Body of pancreas (tissue), 4 donors: ENCODE measurements at regions of chr1 and their contacts with region 1.

Region 1: GRCh38 chr1:100866041-100866900 is 28.4 kb downstream of the EXTL2 start:
- DNase-seq: peak in 1 of 4 donors; percentile 10
- ATAC-seq: peak; percentile 58
- H3K4me3 ChIP-seq: no peak overlapping the region
- H3K27ac ChIP-seq: no peak overlapping the region
- H3K4me1 ChIP-seq: no peaks in the 10 kb centered on the region
- H3K27me3 ChIP-seq: no peaks in the 10 kb centered on the region
- CTCF ChIP-seq: peak in 6 of 7 experiments; percentile 31 to 63 (median 60)
- POLR2A ChIP-seq: no peak

Region 2: GRCh38 chr1:99808391-99809115 is 1057.7 kb before region 1 on chr1:
- intact Hi-C with region 1: loop called (anchors 5 kb)
- DNase-seq: peak in 2 of 4 donors; percentile 28 to 52
- ATAC-seq: peak; percentile 85
- H3K4me3 ChIP-seq: no peak overlapping the region
- H3K27ac ChIP-seq: no peak overlapping the region
- H3K4me1 ChIP-seq: peaks cover 6% of the 10 kb centered on the region
- H3K27me3 ChIP-seq: no peaks in the 10 kb centered on the region
- CTCF ChIP-seq: peak; percentile 46 to 82 (median 74)
- POLR2A ChIP-seq: no peak

Region 3: GRCh38 chr1:100459358-100460114 is 406.7 kb before region 1 on chr1:
- intact Hi-C with region 1: loop called (anchors 10 kb)
- DNase-seq: peak; percentile 68 to 78 (median 72)
- ATAC-seq: peak; percentile 90
- H3K4me3 ChIP-seq: no peak overlapping the region
- H3K27ac ChIP-seq: no peak overlapping the region
- H3K4me1 ChIP-seq: no peaks in the 10 kb centered on the region
- H3K27me3 ChIP-seq: no peaks in the 10 kb centered on the region
- CTCF ChIP-seq: peak in 6 of 7 experiments; percentile 66 to 84 (median 80)
- POLR2A ChIP-seq: no peak

Region 4: GRCh38 chr1:100604372-100604771 is 261.9 kb before region 1 on chr1:
- intact Hi-C with region 1: loop called (anchors 5 kb)
- DNase-seq: no peak
- ATAC-seq: no peak
- H3K4me3 ChIP-seq: no peak overlapping the region
- H3K27ac ChIP-seq: no peak overlapping the region
- H3K4me1 ChIP-seq: peaks cover 3% of the 10 kb centered on the region
- H3K27me3 ChIP-seq: no peaks in the 10 kb centered on the region
- CTCF ChIP-seq: no peak
- POLR2A ChIP-seq: no peak

Region 5: GRCh38 chr1:100734676-100735075 is 131.6 kb before region 1 on chr1:
- intact Hi-C with region 1: no loop called
- DNase-seq: no peak
- ATAC-seq: peak; percentile 62
- H3K4me3 ChIP-seq: no peak overlapping the region
- H3K27ac ChIP-seq: peak overlapping the region in 2 of 4 donors; percentile 50 to 54
- H3K4me1 ChIP-seq: peaks cover 18% of the 10 kb centered on the region
- H3K27me3 ChIP-seq: no peaks in the 10 kb centered on the region
- CTCF ChIP-seq: no peak
- POLR2A ChIP-seq: no peak